ENCODE measurements at regions of chr1 and their contacts with region 1.

Region 1: DNA sequence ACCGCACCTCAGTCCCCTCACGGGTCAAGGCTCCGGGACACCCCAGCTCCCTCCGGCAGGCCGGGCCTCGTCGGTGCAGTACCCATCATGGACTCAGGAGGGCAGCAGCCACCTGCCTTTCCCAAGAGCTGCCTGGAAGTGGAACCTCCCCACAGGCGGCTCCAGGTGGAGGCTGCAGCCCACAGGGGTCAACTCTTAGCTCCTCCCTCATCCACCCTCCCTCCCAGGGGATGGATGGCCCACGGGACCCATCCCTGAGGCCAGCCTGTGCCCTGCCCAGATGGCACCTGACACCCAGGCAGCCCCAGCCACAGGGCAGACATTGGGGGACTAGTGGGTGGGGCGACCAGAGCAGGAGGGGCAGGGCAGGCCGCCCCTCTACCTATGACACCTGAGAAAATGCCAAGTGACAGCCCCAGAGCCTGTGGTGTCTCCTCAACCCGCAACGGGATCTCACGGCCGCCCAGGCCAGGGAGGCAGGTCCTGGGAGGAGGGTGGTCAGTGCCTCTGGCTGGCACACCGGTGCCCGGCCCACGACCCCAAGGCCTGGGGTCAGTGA is 1.2 kb upstream of the ARHGEF16 start:
- DNase-seq: peak; percentile 71 to 84
- ATAC-seq: peak; percentile 85 to 92 (median 89)
- H3K4me3 ChIP-seq: no peak overlapping the region
- H3K27ac ChIP-seq: no peak overlapping the region
- H3K4me1 ChIP-seq: peaks cover 21% of the 10 kb centered on the region
- H3K27me3 ChIP-seq: peaks cover 0 to 8% (median 0%) of the 10 kb centered on the region in 3 donors
- CTCF ChIP-seq: peak; percentile 98

Region 2: DNA sequence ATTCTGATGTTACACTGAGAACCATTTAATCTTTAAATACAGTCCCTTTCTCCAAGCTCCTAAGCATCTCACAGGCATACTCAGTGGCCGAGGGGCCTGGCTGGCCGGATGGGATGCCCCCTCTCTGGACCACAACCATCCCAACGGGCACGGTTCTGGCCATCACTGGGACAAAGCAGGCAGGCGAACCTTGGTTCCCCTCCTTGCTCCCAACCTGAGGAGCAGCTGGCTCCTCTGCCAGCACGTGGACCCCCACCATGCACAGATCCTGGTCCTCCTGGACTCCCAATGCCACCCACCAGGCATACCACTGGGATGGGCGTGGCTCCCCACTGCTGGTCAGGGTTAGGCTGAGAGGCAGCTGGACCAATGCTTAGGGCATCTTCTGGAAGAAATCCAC is 404.1 kb before region 1 on chr1:
- intact Hi-C with region 1: no loop called
- DNase-seq: no peak
- ATAC-seq: no peak
- H3K4me3 ChIP-seq: no peak overlapping the region
- H3K27ac ChIP-seq: no peak overlapping the region
- H3K4me1 ChIP-seq: no peaks in the 10 kb centered on the region
- H3K27me3 ChIP-seq: peaks cover 0 to 33% (median 12%) of the 10 kb centered on the region in 3 donors
- CTCF ChIP-seq: no peak

Region 3: GRCh38 chr1:3483801-3484444 is 30.6 kb after region 1 on chr1:
- intact Hi-C with region 1: loop called (anchors 1 to 2 kb)
- DNase-seq: peak; percentile 44 to 71
- ATAC-seq: peak; percentile 68 to 87 (median 76)
- H3K4me3 ChIP-seq: no peak overlapping the region
- H3K27ac ChIP-seq: no peak overlapping the region
- H3K4me1 ChIP-seq: no peaks in the 10 kb centered on the region
- H3K27me3 ChIP-seq: peaks cover 0 to 7% (median 2%) of the 10 kb centered on the region in 3 donors
- CTCF ChIP-seq: peak; percentile 84

Region 4: DNA sequence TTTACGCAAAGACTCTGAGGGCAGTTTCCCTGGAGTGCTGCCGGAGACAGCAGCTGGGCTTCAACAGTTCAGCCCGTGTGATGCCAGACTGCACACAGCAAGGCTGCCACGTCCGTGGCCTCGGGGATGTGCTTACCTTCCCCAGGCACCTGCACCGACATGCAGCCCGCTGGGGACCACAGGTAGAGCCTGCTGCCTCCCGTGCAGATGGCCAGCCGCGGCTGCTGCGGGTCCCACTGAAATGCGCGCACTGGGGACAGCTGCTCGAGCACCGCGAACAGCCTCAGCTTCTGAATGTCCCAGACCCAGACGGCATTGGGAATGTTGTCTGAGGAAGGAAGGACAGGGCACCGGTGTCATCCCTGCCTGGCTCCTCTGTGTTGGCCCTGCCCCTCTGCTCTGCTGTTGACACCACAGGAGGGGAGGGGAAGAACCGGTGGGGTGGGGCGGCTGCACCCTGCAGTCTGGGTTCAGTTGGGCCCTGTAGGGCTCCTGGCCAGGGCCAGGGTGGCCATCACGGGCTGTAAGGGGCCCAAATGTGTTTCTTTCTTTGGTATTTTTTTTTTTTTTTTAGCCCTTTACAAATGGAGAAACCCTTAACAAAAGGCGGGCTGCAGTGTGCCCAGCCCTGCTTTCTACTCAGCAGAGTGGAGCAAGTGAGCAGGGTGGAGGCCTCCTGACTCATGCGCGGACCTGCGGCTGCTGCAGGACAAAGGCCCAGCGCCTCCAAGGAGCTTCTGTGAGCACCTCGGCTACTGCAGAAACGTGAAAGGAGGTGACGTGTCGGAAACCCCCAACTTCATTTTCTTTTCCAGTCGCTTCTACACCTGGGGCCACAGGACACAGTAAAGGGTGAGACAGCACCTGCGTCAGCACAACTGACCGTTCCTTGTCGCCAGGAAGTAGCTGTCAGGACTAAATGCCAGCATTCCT is 178.3 kb after region 1 on chr1:
- intact Hi-C with region 1: no loop called
- DNase-seq: no peak
- ATAC-seq: no peak
- H3K4me3 ChIP-seq: no peak overlapping the region
- H3K27ac ChIP-seq: no peak overlapping the region
- H3K4me1 ChIP-seq: no peaks in the 10 kb centered on the region
- H3K27me3 ChIP-seq: no peaks in the 10 kb centered on the region
- CTCF ChIP-seq: no peak

Region 5: DNA sequence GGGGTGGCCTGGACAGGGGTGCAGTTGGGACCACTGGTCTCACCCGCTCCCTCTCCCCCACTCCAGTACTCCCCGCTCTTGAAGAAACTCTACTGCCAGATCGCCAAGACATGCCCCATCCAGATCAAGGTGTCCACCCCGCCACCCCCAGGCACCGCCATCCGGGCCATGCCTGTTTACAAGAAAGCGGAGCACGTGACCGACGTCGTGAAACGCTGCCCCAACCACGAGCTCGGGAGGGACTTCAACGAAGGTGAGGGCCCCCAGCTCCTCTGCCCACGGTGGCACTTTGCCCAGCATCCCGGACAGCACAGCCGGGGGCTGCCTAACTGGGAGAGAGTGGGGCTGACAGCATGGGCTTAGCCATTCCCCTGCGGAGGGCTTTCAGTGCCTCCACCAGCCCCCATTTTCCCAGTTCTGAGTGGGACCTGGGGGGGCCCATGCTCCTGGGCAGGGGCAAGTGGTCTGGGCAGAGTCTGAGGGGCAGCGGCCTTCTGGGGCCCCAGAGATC is 268.7 kb after region 1 on chr1:
- intact Hi-C with region 1: loop called in 1 of 2 experiments (anchors 5 kb)
- DNase-seq: no peak
- ATAC-seq: no peak
- H3K4me3 ChIP-seq: no peak overlapping the region
- H3K27ac ChIP-seq: no peak overlapping the region
- H3K4me1 ChIP-seq: no peaks in the 10 kb centered on the region
- H3K27me3 ChIP-seq: peaks cover 0 to 5% (median 0%) of the 10 kb centered on the region in 3 donors
- CTCF ChIP-seq: no peak